MCF 10A (cell line): ENCODE measurements at regions of chr4 and their contacts with region 1.

Region 1: DNA sequence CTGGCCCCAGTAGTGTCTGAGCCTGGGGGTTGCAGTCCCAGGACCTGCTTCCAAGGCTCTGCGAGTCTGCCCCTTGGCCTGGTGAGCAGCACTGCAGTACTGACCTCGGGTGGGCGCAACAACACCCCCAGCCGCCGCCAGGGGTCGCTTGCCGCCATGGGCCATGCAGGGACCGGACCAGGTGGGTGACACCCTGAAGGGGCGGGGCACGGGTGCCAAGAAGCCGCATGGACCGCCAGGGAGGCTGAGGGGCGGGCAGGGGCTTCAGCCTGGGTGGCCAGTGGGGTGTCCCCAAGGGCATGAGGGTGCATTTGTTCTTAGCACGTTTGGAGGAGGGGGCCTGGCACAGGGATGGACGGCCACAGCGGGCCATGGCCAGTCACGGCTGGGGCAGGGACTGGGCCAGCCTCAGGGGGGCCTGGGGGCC is 25.0 kb downstream of the TACC3 start:
- DNase-seq: peak; percentile 64
- H3K4me3 Mint-ChIP-seq: no peak overlapping the region
- H3K27ac Mint-ChIP-seq: no peak overlapping the region
- H3K4me1 Mint-ChIP-seq: no peaks in the 10 kb centered on the region
- H3K27me3 Mint-ChIP-seq: no peaks in the 10 kb centered on the region
- CTCF ChIP-seq: peak; percentile 86

Region 2: GRCh38 chr4:1726146-1726934 is 19.9 kb before region 1 on chr4:
- CTCF ChIA-PET with region 1: interaction called, 18 read pairs
- POLR2A ChIA-PET with region 1: interaction called, 3 read pairs
- intact Hi-C with region 1: no loop called
- DNase-seq: peak; percentile 87
- H3K4me3 Mint-ChIP-seq: peak overlapping the region; percentile 67
- H3K27ac Mint-ChIP-seq: peak overlapping the region; percentile 94
- H3K4me1 Mint-ChIP-seq: peaks cover 58% of the 10 kb centered on the region
- H3K27me3 Mint-ChIP-seq: no peaks in the 10 kb centered on the region
- CTCF ChIP-seq: peak; percentile 94

Region 3: DNA sequence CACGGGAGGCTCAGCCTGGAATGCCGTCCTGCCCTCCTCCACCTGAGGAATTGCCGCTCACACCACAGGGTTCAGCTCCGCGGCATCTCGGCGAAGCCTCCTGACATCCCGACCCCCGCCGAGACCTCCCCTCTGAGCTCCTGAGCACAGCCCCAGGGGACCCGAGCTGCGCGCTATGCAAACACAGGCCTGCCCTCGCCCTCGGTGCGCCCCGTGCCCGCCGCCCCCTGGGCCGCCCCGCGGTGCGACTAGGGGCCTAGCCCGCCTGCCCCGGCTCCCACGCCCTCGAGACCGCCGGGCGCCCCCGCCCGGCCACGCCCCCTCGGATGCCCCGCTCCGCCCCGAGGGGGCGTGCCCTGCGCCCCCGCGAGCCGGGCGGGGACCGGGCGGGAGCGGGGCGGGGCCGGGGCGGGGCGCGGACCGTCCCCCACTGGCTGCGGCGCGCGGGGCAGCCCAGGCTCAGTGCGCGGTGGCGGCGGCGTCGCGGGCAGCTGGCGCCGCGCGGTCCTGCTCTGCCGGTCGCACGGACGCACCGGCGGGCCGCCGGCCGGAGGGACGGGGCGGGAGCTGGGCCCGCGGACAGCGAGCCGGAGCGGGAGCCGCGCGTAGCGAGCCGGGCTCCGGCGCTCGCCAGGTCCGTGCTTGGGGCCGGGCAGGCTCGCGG is 46.7 kb after region 1 on chr4 and contains the start of gene FGFR3:
- CTCF ChIA-PET with region 1: interaction called, 10 read pairs
- POLR2A ChIA-PET with region 1: interaction called, 22 read pairs
- intact Hi-C with region 1: loop called (anchors 5 kb)
- DNase-seq: peak; percentile 41
- H3K4me3 Mint-ChIP-seq: peak within 1 kb of the TSS; percentile 39
- H3K27ac Mint-ChIP-seq: no peak within 1 kb of the TSS
- H3K4me1 Mint-ChIP-seq: peaks cover 9% of the 10 kb centered on the region
- H3K27me3 Mint-ChIP-seq: no peaks in the 10 kb centered on the region
- CTCF ChIP-seq: no peak
- total RNA-seq, gene FGFR3: 2.5 and 6.5 TPM in 2 replicates

Region 4: DNA sequence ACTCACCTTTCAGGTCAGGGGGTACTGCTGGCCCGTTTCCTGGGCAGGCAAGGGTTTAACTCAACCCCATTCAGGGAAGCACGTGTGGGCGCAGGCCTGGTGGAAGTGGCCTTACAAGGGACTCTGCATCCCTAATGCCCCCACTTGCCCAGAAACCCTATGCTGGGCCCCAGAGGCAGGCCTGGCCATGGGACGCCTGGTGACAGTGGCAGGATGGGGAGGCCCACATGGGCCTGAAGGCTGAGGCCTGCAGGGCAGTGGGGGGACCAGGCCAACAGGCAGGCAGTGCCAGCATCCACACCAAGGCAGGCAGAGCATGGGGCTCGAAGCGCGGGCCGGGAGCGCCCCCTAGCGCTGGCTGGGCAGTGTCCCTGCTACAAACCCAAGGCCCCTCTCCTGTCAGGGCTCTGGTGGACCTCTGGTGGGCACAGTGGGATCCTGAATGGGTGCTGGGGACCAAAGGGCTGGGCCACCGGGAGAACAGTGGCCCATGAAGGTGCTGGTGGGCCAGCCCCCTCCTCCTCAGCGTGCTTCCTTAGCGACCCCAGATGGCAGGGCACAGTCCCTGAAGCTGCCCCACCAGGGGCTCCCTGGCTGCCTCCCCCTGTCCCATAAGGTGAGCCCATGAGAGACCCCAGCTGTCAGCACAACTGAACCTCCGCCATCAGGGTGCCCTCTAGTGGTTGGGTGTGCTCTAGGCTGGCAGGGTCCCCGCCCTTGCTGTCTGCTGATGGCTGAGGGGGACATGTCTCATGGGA is 63.7 kb after region 1 on chr4:
- CTCF ChIA-PET with region 1: interaction called, 151 read pairs
- POLR2A ChIA-PET with region 1: interaction called, 5 read pairs
- intact Hi-C with region 1: loop called (anchors 1 kb)
- DNase-seq: peak; percentile 68
- H3K4me3 Mint-ChIP-seq: no peak overlapping the region
- H3K27ac Mint-ChIP-seq: no peak overlapping the region
- H3K4me1 Mint-ChIP-seq: no peaks in the 10 kb centered on the region
- H3K27me3 Mint-ChIP-seq: no peaks in the 10 kb centered on the region
- CTCF ChIP-seq: peak; percentile 89

Region 5: DNA sequence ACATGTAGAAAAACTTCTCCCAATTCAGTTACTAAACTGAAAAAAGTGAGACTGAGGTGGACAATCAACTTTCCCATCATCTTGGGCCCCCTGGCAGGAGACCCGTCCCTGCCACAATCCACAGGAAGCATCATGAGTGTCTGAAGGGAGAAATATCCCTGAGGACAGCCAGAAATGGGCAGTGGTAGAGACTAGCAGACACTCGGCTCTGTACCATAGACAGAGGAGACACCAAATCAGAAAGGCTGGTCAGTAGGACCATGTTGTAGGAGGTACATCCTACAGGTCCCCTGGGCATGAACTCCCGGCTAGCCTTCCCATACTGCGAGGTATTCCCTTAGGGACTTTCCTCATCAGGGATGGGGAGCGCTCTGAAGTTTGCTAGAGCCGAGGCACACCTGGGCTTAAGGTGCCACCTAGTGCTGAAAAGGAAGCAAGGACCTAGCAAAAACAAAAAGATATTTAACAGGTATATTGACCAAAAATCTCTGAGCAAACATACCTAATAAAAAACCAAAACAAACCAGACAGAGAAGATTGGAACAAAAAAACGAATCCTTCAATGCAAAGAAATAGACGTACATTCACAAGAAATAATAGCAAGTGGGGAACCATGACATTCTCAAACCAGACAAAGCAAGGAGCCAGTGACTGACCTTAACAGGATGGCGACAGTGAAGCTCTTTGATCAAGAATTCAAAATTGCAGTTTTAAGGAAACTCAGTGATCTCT is 440.0 kb after region 1 on chr4:
- CTCF ChIA-PET with region 1: no interaction called
- POLR2A ChIA-PET with region 1: no interaction called
- intact Hi-C with region 1: loop called (anchors 1 kb)
- DNase-seq: peak; percentile 70
- H3K4me3 Mint-ChIP-seq: no peak overlapping the region
- H3K27ac Mint-ChIP-seq: no peak overlapping the region
- H3K4me1 Mint-ChIP-seq: no peaks in the 10 kb centered on the region
- H3K27me3 Mint-ChIP-seq: no peaks in the 10 kb centered on the region
- CTCF ChIP-seq: peak; percentile 81